ENCODE measurements at regions of chr2 and their contacts with region 1.

Region 1: DNA sequence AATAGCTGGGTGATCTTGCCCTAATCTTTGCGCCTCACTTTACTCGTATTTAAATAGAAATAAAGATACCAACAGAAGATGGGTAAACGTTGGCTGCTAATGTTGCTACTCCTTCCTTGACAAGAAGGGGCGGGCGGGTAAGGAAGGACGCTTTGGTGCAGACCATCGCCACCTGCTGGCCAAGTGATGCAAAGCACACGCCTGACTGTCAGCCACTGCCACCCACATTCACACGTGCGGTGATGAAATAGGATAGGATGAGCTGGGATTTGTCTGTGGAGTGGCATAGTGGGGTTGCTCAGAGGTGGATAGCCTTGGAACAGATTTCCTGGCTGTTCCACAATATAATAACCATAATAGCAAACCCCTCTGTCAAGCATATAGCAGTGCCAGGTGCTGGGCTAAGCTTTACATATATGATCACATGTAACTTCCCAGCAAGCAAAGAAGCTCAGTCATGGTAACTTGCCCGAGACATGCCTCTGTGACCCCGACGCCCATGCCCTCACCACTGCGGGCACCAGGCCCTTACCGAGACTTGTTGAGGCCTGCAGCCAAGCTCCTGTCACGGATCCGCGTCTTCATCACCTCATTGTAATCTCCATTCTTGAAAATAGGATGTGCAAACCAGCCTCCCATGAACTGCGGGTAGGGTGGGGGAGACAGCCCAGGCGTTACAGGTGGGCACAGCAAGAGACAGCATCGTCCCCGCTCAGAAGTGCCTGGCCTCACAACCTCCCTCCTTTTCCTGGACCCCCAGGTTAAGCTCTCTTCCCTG is 39.3 kb downstream of the LCT start:
- DNase-seq: peak; percentile 87
- ATAC-seq: peak; percentile 87
- H3K4me3 Mint-ChIP-seq: no peak overlapping the region
- H3K27ac Mint-ChIP-seq: no peak overlapping the region
- H3K4me1 Mint-ChIP-seq: peaks cover 23% of the 10 kb centered on the region
- H3K27me3 Mint-ChIP-seq: no peaks in the 10 kb centered on the region

Region 2: GRCh38 chr2:135004005-135004746 is 793.5 kb before region 1 on chr2:
- CTCF ChIA-PET with region 1: interaction called, 19 read pairs
- POLR2A ChIA-PET with region 1: no interaction called
- DNase-seq: peak; percentile 75
- ATAC-seq: peak; percentile 96
- H3K4me3 Mint-ChIP-seq: no peak overlapping the region
- H3K27ac Mint-ChIP-seq: no peak overlapping the region
- H3K4me1 Mint-ChIP-seq: peaks cover 4% of the 10 kb centered on the region
- H3K27me3 Mint-ChIP-seq: peaks cover 8% of the 10 kb centered on the region

Region 3: DNA sequence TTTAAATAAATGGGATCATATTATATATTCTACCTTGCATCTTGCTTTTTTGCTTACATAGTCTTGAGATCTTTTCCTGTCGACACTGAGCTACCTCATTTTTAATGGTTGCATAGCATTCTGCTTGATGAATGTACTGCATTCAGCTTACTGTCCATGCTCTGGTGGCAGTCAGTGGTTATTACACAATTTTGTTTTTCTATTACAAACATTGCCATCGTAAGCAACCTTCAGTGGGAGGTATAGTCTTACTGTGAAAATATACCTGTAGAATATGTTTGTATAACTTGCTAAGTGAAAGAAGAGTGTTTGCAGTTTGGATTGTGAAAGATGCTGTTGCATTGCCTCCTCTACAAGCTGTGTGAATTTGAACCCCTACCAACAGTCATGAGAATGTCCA is 12.7 kb before region 1 on chr2:
- CTCF ChIA-PET with region 1: interaction called, 76 read pairs
- POLR2A ChIA-PET with region 1: no interaction called
- DNase-seq: no peak
- ATAC-seq: no peak
- H3K4me3 Mint-ChIP-seq: no peak overlapping the region
- H3K27ac Mint-ChIP-seq: no peak overlapping the region
- H3K4me1 Mint-ChIP-seq: peaks cover 4% of the 10 kb centered on the region
- H3K27me3 Mint-ChIP-seq: no peaks in the 10 kb centered on the region

Region 4: GRCh38 chr2:135825550-135826176 is 28.0 kb after region 1 on chr2:
- CTCF ChIA-PET with region 1: interaction called, 65 read pairs
- POLR2A ChIA-PET with region 1: no interaction called
- DNase-seq: no peak
- ATAC-seq: no peak
- H3K4me3 Mint-ChIP-seq: no peak overlapping the region
- H3K27ac Mint-ChIP-seq: no peak overlapping the region
- H3K4me1 Mint-ChIP-seq: peaks cover 44% of the 10 kb centered on the region
- H3K27me3 Mint-ChIP-seq: no peaks in the 10 kb centered on the region

Region 5: DNA sequence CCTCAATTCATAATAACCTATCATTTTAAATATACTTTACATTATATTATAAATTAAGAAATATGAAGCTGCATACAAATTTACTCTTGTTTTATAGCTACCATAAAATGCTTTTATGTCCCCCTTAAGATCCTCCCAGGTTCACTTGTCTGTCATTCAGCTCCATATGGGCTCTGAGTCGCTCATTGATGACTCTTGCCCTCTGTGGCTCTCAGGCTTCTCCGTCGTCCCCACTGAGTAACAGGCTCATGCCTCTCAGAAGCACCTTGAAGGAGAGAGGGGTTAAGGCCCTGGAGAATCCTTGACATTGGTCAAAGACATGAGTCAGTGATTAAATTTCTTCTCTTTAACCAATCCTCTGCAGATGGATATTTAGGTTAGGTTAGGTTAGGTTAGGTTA is 84.7 kb after region 1 on chr2:
- CTCF ChIA-PET with region 1: no interaction called
- POLR2A ChIA-PET with region 1: no interaction called
- DNase-seq: no peak
- ATAC-seq: no peak
- H3K4me3 Mint-ChIP-seq: no peak overlapping the region
- H3K27ac Mint-ChIP-seq: no peak overlapping the region
- H3K4me1 Mint-ChIP-seq: peaks cover 5% of the 10 kb centered on the region
- H3K27me3 Mint-ChIP-seq: peaks cover 18% of the 10 kb centered on the region

Region 6: DNA sequence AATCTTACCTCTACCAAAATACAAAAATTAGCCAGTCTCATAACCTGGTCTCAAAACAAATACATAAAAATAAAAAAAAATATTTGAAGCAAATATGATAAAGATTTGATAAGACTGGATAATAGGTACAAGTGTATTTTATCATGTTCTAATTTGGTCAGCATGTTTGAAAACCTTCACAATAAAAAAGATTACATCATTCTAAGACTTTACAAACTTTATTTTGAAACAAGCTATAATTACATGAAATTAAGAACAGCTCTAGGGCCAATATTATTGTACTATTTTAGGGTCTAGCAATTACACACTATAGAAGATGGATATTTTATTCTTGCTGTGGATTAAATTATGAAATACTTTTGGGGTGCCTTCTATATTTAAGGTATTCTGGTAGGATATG is 108.0 kb after region 1 on chr2:
- CTCF ChIA-PET with region 1: no interaction called
- POLR2A ChIA-PET with region 1: no interaction called
- DNase-seq: no peak
- ATAC-seq: no peak
- H3K4me3 Mint-ChIP-seq: no peak overlapping the region
- H3K27ac Mint-ChIP-seq: no peak overlapping the region
- H3K4me1 Mint-ChIP-seq: no peaks in the 10 kb centered on the region
- H3K27me3 Mint-ChIP-seq: no peaks in the 10 kb centered on the region